ENCODE measurements at regions of chr1 and their contacts with region 1.

Region 1: GRCh38 chr1:47755101-47755990 is 241.8 kb downstream of the TRABD2B start:
- DNase-seq: peak; percentile 63
- H3K4me3 ChIP-seq: no peak overlapping the region
- H3K27ac ChIP-seq: no peak overlapping the region
- H3K4me1 ChIP-seq: peaks cover 6 to 19% (median 16%) of the 10 kb centered on the region in 4 donors
- H3K27me3 ChIP-seq: no peaks in the 10 kb centered on the region
- CTCF ChIP-seq: peak; percentile 50 to 72 (median 60)
- EP300 ChIP-seq: no peak
- POLR2A ChIP-seq: no peak

Region 2: DNA sequence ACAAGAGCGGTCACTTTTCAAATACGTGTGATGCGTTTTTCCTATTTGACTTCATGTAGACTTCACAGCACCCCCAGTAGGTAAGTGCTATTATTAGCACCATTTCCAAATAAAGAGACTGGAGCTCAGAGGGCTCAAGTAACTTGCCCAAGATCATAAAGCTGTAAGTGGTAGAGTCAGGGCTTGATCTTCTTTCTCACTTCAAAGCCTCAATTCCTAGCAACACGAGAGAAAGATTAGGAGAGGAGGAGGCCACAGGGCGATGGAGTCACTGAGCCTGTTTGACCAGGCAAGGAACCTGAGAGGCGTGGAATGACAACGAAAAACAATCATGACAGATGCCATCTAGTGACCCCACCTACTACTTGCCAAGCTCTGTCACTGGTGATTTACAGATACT is 136.5 kb before region 1 on chr1:
- in situ Hi-C with region 1: no loop called
- intact Hi-C with region 1: no loop called
- DNase-seq: no peak
- H3K4me3 ChIP-seq: no peak overlapping the region
- H3K27ac ChIP-seq: no peak overlapping the region
- H3K4me1 ChIP-seq: no peaks in the 10 kb centered on the region
- H3K27me3 ChIP-seq: no peaks in the 10 kb centered on the region
- CTCF ChIP-seq: no peak
- EP300 ChIP-seq: no peak
- POLR2A ChIP-seq: no peak

Region 3: DNA sequence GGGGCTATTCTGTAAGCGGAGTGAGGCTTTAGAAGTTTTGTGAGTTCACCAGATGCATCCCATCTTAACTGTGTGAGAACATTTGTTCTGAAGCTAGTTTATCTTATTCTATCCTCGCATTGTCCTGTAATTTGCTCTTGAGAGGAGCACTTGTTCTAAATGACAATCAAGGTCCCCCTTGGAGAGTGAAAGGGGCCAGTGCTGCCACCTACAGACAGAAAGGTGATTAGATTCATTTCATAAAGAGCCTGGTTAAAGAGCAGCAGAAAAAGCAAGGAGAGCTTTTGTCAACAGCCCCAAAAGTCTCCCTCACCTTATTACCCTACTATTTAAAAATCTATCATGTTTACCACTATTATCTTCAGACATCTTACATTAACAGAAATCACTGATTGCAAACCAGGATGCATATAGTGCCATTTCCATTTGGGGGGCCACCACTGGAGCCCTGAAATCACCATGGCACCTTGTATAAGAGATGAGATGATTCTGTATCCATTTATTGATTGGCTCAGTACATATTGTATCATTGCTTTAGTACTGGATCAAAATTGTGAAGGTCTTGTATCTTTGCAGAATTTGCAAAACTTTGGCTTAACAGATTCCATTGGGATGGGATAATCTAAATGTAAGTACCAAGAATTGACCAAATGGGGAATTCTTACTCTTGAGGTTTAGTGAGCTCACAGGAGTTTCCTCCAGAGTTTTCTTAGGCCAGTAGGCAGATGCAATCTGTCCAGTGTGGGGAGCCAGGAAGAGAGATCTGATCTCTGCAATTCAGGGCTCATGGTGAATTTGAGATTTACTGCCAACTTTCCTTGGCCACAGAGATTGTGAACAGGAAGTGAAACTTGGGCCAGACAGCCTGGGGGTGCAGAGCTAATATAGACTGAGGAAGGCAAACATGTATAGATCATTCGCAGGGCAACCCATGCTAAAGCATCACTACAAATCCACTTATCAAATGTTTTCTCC is 306.1 kb after region 1 on chr1:
- in situ Hi-C with region 1: loop called in 1 of 4 experiments (anchors 25 kb)
- intact Hi-C with region 1: no loop called
- DNase-seq: peak; percentile 43
- H3K4me3 ChIP-seq: no peak overlapping the region
- H3K27ac ChIP-seq: no peak overlapping the region
- H3K4me1 ChIP-seq: no peaks in the 10 kb centered on the region
- H3K27me3 ChIP-seq: no peaks in the 10 kb centered on the region
- CTCF ChIP-seq: peak; percentile 54 to 65 (median 58)
- EP300 ChIP-seq: no peak
- POLR2A ChIP-seq: no peak

Region 4: GRCh38 chr1:48236716-48237470 is 481.5 kb after region 1 on chr1:
- in situ Hi-C with region 1: loop called in 1 of 4 experiments (anchors 25 kb)
- intact Hi-C with region 1: no loop called
- DNase-seq: no peak
- H3K4me3 ChIP-seq: no peak overlapping the region
- H3K27ac ChIP-seq: no peak overlapping the region
- H3K4me1 ChIP-seq: no peaks in the 10 kb centered on the region
- H3K27me3 ChIP-seq: no peaks in the 10 kb centered on the region
- CTCF ChIP-seq: peak; percentile 44 to 84 (median 60)
- EP300 ChIP-seq: no peak
- POLR2A ChIP-seq: no peak